ENCODE measurements at regions of chr21 and their contacts with region 1.

Region 1: DNA sequence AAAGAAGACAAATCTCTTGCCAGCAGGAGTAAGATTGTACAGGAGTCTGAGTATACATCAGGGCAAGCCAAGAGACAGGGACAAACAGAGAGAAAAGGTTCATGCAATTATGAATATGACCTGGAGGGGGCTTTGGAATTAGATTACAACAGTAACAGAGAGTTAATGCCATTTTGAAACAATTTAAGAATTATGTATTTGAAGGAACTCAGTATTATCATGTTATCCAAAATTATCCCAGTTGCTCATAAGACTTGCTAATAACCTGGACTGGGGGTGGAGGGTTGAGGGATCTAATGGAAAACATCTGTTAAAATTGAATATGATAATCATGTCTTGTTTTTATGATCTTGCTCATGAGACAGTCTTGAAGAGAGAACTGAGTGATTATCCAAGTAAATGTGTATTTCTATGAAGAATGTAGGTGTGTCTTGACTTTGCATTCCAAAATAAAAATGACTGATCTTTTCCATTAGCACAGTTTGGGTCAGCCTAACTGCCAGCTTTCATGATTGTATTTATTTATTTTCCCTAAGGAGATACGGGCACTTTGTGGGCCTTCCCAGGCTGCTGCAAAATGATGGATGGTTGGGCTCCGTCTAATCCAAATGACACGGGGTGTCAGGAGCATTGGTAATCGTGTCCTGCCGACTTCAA is 117.7 kb downstream of the ERG start:
- DNase-seq: peak; percentile 48
- H3K4me3 ChIP-seq: no peak overlapping the region
- H3K27ac ChIP-seq: no peak overlapping the region
- H3K4me1 ChIP-seq: peaks cover 49% of the 10 kb centered on the region
- H3K27me3 ChIP-seq: no peaks in the 10 kb centered on the region
- CTCF ChIP-seq: peak; percentile 13 to 18
- POLR2A ChIP-seq: no peak

Region 2: DNA sequence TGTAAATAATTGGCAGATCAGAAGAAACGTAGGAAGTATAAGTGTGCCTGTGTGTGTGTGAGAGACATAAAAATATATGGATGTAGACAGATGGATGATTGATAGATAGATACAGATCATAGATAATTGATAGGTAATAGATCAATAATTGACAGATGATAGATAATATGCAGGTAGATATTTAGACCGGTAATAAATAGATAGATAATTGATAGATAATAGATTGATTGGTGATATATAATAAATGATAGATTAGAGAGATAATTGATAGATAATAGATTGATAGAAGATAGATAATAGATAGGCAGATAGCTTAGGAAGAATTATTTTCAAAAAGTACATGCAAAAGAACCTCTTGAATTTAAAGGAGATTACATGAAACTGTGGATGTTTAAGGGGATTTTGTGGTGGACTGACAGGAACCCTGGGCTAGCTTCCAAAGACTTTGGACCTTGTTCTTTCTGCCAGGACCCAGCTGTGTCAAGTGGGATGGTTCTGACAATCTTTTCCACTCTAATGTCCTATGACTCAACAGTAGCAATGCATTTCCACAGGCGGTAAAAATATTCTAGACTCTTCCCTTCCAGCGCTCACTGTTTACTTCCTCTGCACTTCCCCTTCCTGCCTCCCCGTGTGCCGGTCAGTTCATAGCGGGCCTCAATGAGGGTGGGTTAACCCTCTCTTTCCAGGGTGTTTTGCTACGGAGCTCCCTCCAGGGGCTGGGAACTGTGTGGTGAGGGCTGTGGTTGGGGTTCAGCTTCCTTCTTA is 84.4 kb before region 1 on chr21:
- CTCF ChIA-PET with region 1: no interaction called
- POLR2A ChIA-PET with region 1: no interaction called
- dilution Hi-C with region 1: no loop called
- intact Hi-C with region 1: loop called (anchors 2 kb)
- DNase-seq: peak; percentile 68
- H3K4me3 ChIP-seq: peak overlapping the region in 1 of 3 experiments; percentile 18
- H3K27ac ChIP-seq: no peak overlapping the region
- H3K4me1 ChIP-seq: peaks cover 28% of the 10 kb centered on the region
- H3K27me3 ChIP-seq: no peaks in the 10 kb centered on the region
- CTCF ChIP-seq: no peak
- POLR2A ChIP-seq: no peak

Region 3: DNA sequence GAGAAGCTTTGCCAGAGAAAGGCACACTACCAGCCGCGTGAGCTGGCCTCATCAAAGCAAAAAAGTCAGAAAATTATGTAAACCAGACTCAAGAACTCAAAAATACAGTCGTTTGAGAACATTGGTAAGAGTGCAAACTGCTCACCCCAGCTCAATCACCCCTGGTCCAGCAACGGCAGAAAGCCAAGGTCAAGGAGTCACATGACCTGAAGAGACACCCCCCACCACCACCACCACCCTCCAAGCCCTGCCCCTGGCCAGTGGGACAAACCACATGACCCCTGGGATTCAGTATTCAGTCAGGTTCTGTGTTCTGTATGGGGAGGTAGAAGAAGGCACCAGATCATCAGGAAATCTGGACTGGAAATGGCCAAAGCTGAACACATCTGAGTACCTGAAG is 207.5 kb after region 1 on chr21:
- CTCF ChIA-PET with region 1: no interaction called
- POLR2A ChIA-PET with region 1: no interaction called
- dilution Hi-C with region 1: no loop called
- intact Hi-C with region 1: no loop called
- DNase-seq: no peak
- H3K4me3 ChIP-seq: no peak overlapping the region
- H3K27ac ChIP-seq: no peak overlapping the region
- H3K4me1 ChIP-seq: no peaks in the 10 kb centered on the region
- H3K27me3 ChIP-seq: peaks cover 6% of the 10 kb centered on the region in 2 experiments
- CTCF ChIP-seq: no peak
- POLR2A ChIP-seq: no peak

Region 4: GRCh38 chr21:39175154-39175553 is 794.5 kb after region 1 on chr21:
- CTCF ChIA-PET with region 1: no interaction called
- POLR2A ChIA-PET with region 1: no interaction called
- dilution Hi-C with region 1: no loop called
- intact Hi-C with region 1: loop called (anchors 10 kb)
- DNase-seq: peak; percentile 44
- H3K4me3 ChIP-seq: no peak overlapping the region
- H3K27ac ChIP-seq: no peak overlapping the region
- H3K4me1 ChIP-seq: peaks cover 10% of the 10 kb centered on the region
- H3K27me3 ChIP-seq: no peaks in the 10 kb centered on the region
- CTCF ChIP-seq: peak in 1 of 2 donors; percentile 13
- POLR2A ChIP-seq: no peak

Measured in endothelial cell of umbilical vein (primary cell).